Caco-2 (cell line): ENCODE measurements at regions of chr11 and their contacts with region 1.

Region 1: GRCh38 chr11:113730887-113731726 is 25.0 kb upstream of the TMPRSS5 start:
- DNase-seq: peak; percentile 83 to 86
- H3K4me3 ChIP-seq: no peak overlapping the region
- H3K4me3 Mint-ChIP-seq: no peak overlapping the region
- H3K27ac Mint-ChIP-seq: no peak overlapping the region
- H3K4me1 ChIP-seq: peaks cover 45% of the 10 kb centered on the region
- H3K4me1 Mint-ChIP-seq: peaks cover 27% of the 10 kb centered on the region
- H3K27me3 ChIP-seq: no peaks in the 10 kb centered on the region
- H3K27me3 Mint-ChIP-seq: no peaks in the 10 kb centered on the region
- CTCF ChIP-seq: peak; percentile 89 to 92

Region 2: GRCh38 chr11:113305440-113306336 is 425.4 kb before region 1 on chr11:
- CTCF ChIA-PET with region 1: interaction called, 9 read pairs
- POLR2A ChIA-PET with region 1: no interaction called
- intact Hi-C with region 1: loop called (anchors 1 kb)
- DNase-seq: peak; percentile 81 to 88
- H3K4me3 ChIP-seq: no peak overlapping the region
- H3K4me3 Mint-ChIP-seq: no peak overlapping the region
- H3K27ac Mint-ChIP-seq: no peak overlapping the region
- H3K4me1 ChIP-seq: no peaks in the 10 kb centered on the region
- H3K4me1 Mint-ChIP-seq: no peaks in the 10 kb centered on the region
- H3K27me3 ChIP-seq: no peaks in the 10 kb centered on the region; the same call in 1 of the 2 replicates
- H3K27me3 Mint-ChIP-seq: no peaks in the 10 kb centered on the region
- CTCF ChIP-seq: peak; percentile 99

Region 3: DNA sequence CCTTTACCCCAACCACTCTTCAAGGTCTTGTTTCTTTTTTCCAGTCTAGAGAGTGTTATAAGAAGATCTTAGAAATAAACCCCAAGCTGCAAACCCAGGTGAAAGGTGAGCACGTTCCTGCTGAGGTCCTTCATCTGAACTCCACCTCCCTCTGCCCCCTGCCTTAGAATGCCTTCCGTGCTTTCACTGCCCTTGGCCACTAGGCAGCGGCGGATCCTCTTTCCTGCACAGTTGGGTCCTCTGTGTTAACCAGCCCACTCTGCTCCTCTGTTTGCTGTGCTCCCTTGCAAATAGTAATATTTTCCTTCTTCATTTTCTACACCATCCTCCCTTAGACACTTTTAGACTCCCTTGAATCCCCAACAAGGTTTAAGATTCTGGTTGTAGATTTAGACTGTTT is 392.4 kb before region 1 on chr11:
- CTCF ChIA-PET with region 1: no interaction called
- POLR2A ChIA-PET with region 1: no interaction called
- intact Hi-C with region 1: loop called (anchors 1 kb)
- DNase-seq: peak in 1 of 2 experiments; percentile 40
- H3K4me3 ChIP-seq: no peak overlapping the region
- H3K4me3 Mint-ChIP-seq: no peak overlapping the region
- H3K27ac Mint-ChIP-seq: no peak overlapping the region
- H3K4me1 ChIP-seq: peaks cover 4% of the 10 kb centered on the region; the same call in 1 of the 2 replicates
- H3K4me1 Mint-ChIP-seq: peaks cover 11% of the 10 kb centered on the region
- H3K27me3 ChIP-seq: no peaks in the 10 kb centered on the region
- H3K27me3 Mint-ChIP-seq: no peaks in the 10 kb centered on the region
- CTCF ChIP-seq: peak in 1 of 2 experiments; percentile 15

Region 4: GRCh38 chr11:113474362-113475159 is 256.5 kb before region 1 on chr11:
- CTCF ChIA-PET with region 1: interaction called, 3 read pairs
- POLR2A ChIA-PET with region 1: no interaction called
- intact Hi-C with region 1: loop called (anchors 2 kb)
- DNase-seq: peak; percentile 95 to 99
- H3K4me3 ChIP-seq: peak overlapping the region; percentile 43
- H3K4me3 Mint-ChIP-seq: peak overlapping the region; percentile 59
- H3K27ac Mint-ChIP-seq: no peak overlapping the region
- H3K4me1 ChIP-seq: peaks cover 8% of the 10 kb centered on the region; the same call in 1 of the 2 replicates
- H3K4me1 Mint-ChIP-seq: peaks cover 9% of the 10 kb centered on the region
- H3K27me3 ChIP-seq: peaks cover 7% of the 10 kb centered on the region
- H3K27me3 Mint-ChIP-seq: peaks cover 17% of the 10 kb centered on the region
- CTCF ChIP-seq: no peak

Region 5: GRCh38 chr11:113540416-113541330 is 190.4 kb before region 1 on chr11:
- CTCF ChIA-PET with region 1: interaction called, 16 read pairs
- POLR2A ChIA-PET with region 1: interaction called, 8 read pairs
- intact Hi-C with region 1: loop called (anchors 1 kb)
- DNase-seq: no peak
- H3K4me3 ChIP-seq: no peak overlapping the region
- H3K4me3 Mint-ChIP-seq: no peak overlapping the region
- H3K27ac Mint-ChIP-seq: peak overlapping the region; percentile 40
- H3K4me1 ChIP-seq: peaks cover 35% of the 10 kb centered on the region
- H3K4me1 Mint-ChIP-seq: peaks cover 43% of the 10 kb centered on the region
- H3K27me3 ChIP-seq: no peaks in the 10 kb centered on the region
- H3K27me3 Mint-ChIP-seq: no peaks in the 10 kb centered on the region
- CTCF ChIP-seq: peak; percentile 9 to 26

Region 6: DNA sequence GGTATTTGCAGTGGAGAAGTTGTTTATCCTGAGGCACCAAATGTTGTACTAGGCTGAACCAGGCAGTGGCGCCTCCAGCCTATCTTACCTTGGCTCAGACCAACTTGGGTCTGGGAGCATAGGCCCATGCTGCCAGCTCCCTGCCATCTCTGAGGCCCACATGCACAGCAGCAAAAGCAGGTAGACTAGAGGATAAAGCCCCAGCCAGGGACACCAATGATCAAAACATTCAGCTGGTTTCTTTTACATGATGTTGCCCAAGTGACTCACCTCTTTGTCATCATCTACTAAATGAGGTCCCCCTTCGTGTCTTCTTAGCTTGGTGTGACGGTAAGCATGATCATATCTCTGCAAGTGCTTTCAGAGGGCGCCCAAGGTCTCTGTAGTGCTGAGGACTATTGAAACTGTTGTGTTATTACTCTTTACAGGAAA is 143.8 kb before region 1 on chr11:
- CTCF ChIA-PET with region 1: interaction called, 7 read pairs
- POLR2A ChIA-PET with region 1: no interaction called
- intact Hi-C with region 1: loop called (anchors 1 kb)
- DNase-seq: no peak
- H3K4me3 ChIP-seq: no peak overlapping the region
- H3K4me3 Mint-ChIP-seq: no peak overlapping the region
- H3K27ac Mint-ChIP-seq: no peak overlapping the region
- H3K4me1 ChIP-seq: 0 out of 2 replicates have a peak, but pooled peaks cover 4% of the 10 kb centered on the region
- H3K4me1 Mint-ChIP-seq: peaks cover 18% of the 10 kb centered on the region
- H3K27me3 ChIP-seq: no peaks in the 10 kb centered on the region
- H3K27me3 Mint-ChIP-seq: no peaks in the 10 kb centered on the region
- CTCF ChIP-seq: no peak

Region 7: GRCh38 chr11:113796663-113797259 is 65.7 kb after region 1 on chr11:
- CTCF ChIA-PET with region 1: interaction called, 12 read pairs
- POLR2A ChIA-PET with region 1: no interaction called
- intact Hi-C with region 1: no loop called
- DNase-seq: peak; percentile 48 to 70
- H3K4me3 ChIP-seq: no peak overlapping the region
- H3K4me3 Mint-ChIP-seq: no peak overlapping the region
- H3K27ac Mint-ChIP-seq: no peak overlapping the region
- H3K4me1 ChIP-seq: no peaks in the 10 kb centered on the region
- H3K4me1 Mint-ChIP-seq: no peaks in the 10 kb centered on the region
- H3K27me3 ChIP-seq: no peaks in the 10 kb centered on the region
- H3K27me3 Mint-ChIP-seq: no peaks in the 10 kb centered on the region
- CTCF ChIP-seq: peak; percentile 79 to 86